Heart left ventricle (tissue), 16 donors: ENCODE measurements at regions of chr11 and their contacts with region 1.

Region 1: GRCh38 chr11:14358729-14359439 is at the start of gene RRAS2:
- DNase-seq: peak; percentile 75 to 88 (median 82)
- ATAC-seq: peak; percentile 79 to 94 (median 89)
- H3K4me3 ChIP-seq: peak within 1 kb of the TSS; percentile 76 to 97 (median 85)
- H3K27ac ChIP-seq: peak within 1 kb of the TSS; percentile 53 to 92 (median 81)
- H3K4me1 ChIP-seq: peaks cover 0 to 33% (median 12%) of the 10 kb centered on the region in 12 donors
- H3K27me3 ChIP-seq: peaks cover 0 to 6% (median 0%) of the 10 kb centered on the region in 9 donors
- CTCF ChIP-seq: peak in 1 of 12 donors; percentile 20
- POLR2A ChIP-seq: peak; percentile 70 to 93
- total RNA-seq, gene RRAS2: 25.1 to 111 (median 61.8) TPM

Region 2: GRCh38 chr11:14300661-14301304 is 58.1 kb before region 1 on chr11:
- intact Hi-C with region 1: loop called in 2 of 10 experiments (anchors 5 to 10 kb)
- DNase-seq: peak in 4 of 5 donors; percentile 32 to 40 (median 37)
- ATAC-seq: peak; percentile 76 to 93 (median 91)
- H3K4me3 ChIP-seq: no peak overlapping the region
- H3K27ac ChIP-seq: no peak overlapping the region
- H3K4me1 ChIP-seq: peaks cover 0 to 41% (median 15%) of the 10 kb centered on the region in 12 donors
- H3K27me3 ChIP-seq: no peaks in the 10 kb centered on the region
- CTCF ChIP-seq: peak; percentile 67 to 83 (median 76)
- POLR2A ChIP-seq: no peak

Region 3: DNA sequence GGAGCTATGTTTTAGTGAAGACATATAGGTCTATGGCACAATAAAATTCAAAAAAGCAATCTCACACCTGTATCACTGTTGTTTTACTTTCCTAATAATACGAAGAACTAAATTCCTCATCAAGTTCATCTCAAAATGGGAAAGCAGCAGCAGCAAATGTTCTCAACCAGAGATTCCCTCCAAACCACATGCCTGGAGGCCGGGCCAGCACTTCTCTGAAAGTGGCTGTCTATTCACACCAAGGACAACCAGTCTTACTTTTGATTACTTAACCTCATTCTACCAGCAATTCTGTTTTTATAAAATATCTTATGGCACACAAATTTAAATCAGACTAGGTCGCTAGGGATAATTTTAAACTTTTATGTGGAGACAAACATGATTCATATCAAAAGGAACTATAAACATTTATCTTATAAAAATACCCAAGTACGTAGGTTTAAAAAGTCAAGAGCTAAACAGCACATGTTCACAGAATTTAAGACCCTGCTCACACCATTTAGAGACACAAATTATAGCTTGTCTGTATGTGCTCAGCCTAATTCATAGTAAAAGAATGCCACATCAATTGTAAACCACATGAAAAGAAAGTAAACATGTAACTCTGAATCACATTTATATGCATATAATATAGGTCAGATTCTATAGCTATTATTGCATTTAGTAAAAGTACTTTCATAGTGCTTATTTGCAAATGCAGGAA is 46.0 kb before region 1 on chr11:
- intact Hi-C with region 1: loop called in 2 of 10 experiments (anchors 5 to 10 kb)
- DNase-seq: no peak
- ATAC-seq: no peak
- H3K4me3 ChIP-seq: no peak overlapping the region
- H3K27ac ChIP-seq: peak overlapping the region in 1 of 12 donors; percentile 42
- H3K4me1 ChIP-seq: peaks cover 0 to 52% (median 16%) of the 10 kb centered on the region in 12 donors
- H3K27me3 ChIP-seq: no peaks in the 10 kb centered on the region
- CTCF ChIP-seq: no peak
- POLR2A ChIP-seq: no peak

Region 4: GRCh38 chr11:14454861-14455632 is 96.2 kb after region 1 on chr11:
- intact Hi-C with region 1: loop called in 1 of 10 experiments (anchors 5 kb)
- DNase-seq: no peak
- ATAC-seq: peak in 3 of 4 donors; percentile 44 to 53 (median 45)
- H3K4me3 ChIP-seq: no peak overlapping the region
- H3K27ac ChIP-seq: no peak overlapping the region
- H3K4me1 ChIP-seq: peaks cover 0 to 8% (median 0%) of the 10 kb centered on the region in 12 donors
- H3K27me3 ChIP-seq: no peaks in the 10 kb centered on the region
- CTCF ChIP-seq: peak; percentile 46 to 74 (median 63)
- POLR2A ChIP-seq: no peak